GM13977 (cell line): ENCODE measurements at regions of chr15 and their contacts with region 1.

Region 1: DNA sequence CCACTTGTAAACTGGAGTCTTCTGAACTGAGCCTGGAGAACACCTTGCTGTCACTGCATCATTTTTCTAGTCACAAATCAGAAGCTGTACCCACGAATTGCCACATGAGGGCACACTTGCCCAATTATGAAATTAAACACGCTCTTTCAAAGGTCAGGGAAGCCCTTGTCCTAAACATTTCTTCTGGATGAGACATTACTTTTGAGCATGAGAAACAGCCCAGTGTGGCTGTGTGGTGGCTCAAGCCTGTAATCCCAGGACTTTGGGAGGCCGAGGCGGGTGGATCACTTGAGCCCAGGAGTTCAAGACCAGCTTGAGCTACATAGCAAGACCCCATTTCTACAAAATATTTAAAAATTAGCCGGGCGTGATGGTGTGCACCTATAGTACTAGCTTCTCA is 27.5 kb upstream of the CFAP161 start:
- DNase-seq: peak; percentile 69
- CTCF ChIP-seq: peak; percentile 84

Region 2: DNA sequence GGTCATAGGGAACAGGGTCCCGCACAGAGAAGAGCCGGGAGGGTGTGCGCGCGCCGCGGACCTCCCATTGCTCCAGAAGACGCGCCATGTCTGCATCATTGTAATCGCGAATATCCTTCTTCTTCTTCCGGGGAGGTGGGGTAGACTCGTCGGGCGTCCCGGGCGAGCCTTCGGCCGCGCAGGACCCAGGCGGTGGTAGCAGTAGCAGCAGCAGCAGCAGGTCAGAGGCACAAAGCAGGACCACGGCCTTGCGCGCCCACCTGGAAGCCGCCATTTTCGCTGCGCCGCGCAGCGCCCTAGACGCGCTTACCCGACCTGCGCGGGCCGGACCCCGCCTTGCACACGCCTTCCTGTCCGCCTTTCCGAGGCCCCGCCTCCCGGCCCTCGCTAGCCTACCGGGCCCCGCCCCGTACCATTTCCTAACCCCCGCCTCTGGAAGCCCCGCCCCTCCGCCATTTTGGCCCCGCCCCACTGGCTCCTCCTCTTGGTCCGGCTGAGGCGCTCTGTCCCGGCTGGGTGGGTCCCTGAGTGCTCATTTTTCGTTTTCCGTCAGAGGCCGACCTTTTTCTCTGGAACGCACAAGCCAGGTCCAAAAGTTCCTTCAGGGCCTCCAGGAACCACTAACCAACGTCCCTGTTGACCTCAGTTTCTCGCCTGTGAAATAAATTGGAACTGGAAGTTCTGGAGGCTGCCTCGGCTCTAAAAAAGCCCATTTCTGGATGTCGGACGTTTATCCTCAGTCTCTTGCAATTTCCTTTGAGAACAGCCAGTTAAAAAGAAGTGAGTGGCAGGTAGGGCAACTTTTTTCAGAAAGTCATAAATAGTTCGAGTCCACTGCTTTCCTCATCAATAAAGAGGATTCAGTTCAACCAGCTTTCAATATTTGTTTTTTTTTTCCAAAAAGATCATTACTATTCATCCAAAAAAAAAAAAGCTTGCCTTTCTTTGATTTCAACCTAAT is 116.8 kb before region 1 on chr15 and contains the start of gene MESD:
- in situ Hi-C with region 1: loop called (anchors 10 kb)
- DNase-seq: peak; percentile 97
- CTCF ChIP-seq: no peak

Region 3: GRCh38 chr15:81155375-81156218 is 49.0 kb after region 1 on chr15:
- in situ Hi-C with region 1: no loop called
- DNase-seq: peak; percentile 57
- CTCF ChIP-seq: peak; percentile 70

Region 4: GRCh38 chr15:81265944-81266775 is 159.6 kb after region 1 on chr15:
- in situ Hi-C with region 1: loop called (anchors 5 kb)
- DNase-seq: peak; percentile 77
- CTCF ChIP-seq: peak; percentile 96